Activated CD4-positive, alpha-beta T cell treated with anti-CD3 and anti-CD28 coated beads, Interleukin-2, amount 10 ng/mL, durations not matched to agents 24 days and 14 days (primary cell): ENCODE measurements at regions of chr15 and their contacts with region 1.

Region 1: DNA sequence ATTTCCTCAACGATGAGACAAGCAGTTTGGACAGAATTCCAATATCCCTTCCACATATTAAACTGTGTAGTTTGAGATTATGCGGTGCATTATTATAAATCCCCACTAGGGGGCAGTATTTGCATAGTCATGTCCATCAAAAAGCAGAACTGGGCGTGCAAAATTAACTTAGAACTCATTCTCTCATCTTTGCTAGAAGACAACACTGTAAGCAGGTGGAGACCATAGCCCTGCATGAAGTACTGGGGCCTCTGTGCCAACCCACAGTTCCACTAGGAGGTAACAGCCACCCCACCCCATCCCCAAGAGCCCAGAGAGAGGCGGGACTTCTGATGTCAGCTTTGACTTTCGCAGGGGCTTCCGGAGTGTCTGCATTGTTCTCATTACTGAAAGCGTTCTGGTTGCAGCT is 106.6 kb upstream of the TMC3 start:
- DNase-seq: peak; percentile 81
- H3K4me3 Mint-ChIP-seq: no peak overlapping the region
- H3K27ac Mint-ChIP-seq: no peak overlapping the region
- H3K4me1 Mint-ChIP-seq: no peaks in the 10 kb centered on the region
- H3K27me3 Mint-ChIP-seq: peaks cover 5% of the 10 kb centered on the region

Region 2: DNA sequence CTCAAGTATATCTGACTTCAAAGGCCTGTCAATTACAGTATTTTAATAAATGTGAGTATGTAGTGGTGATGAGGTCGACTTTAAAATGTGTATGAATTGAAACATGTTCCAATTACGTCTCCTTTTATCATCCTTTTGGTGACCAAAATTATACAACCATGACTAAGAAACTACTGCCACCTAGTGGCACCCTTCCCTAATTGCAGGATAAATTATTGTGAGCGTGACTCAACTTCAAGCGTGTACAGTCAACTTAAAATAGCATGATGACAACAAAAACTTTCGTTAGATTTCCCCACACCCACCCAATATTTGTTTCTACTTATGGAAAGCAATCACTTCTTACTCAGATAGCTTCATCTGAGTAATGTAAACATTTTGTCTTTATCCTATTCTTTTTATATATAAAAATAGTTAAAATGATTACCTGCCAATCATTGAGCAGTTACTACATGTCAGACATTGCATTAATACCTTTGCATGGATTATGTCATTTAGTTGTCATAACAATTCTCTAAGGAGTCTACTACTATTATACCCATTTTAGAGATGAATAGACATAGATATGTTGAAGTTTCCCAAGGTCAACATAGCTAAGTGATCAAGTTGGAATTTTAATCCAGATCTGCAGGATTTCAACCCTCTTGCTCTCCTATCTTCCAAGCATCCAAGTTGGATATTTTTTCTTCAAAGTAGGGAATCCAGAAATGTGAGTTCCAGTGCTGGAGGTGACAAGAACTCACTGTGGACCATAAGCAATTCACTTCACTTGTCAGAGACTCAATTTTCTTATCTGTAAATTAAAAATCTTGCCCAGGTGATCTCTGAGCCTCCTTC is 459.2 kb after region 1 on chr15:
- intact Hi-C with region 1: loop called (anchors 10 kb)
- DNase-seq: no peak
- H3K4me3 Mint-ChIP-seq: no peak overlapping the region
- H3K27ac Mint-ChIP-seq: no peak overlapping the region
- H3K4me1 Mint-ChIP-seq: no peaks in the 10 kb centered on the region
- H3K27me3 Mint-ChIP-seq: peaks cover 6% of the 10 kb centered on the region